GM13977 (cell line): ENCODE measurements at regions of chr19 and their contacts with region 1.

Region 1: DNA sequence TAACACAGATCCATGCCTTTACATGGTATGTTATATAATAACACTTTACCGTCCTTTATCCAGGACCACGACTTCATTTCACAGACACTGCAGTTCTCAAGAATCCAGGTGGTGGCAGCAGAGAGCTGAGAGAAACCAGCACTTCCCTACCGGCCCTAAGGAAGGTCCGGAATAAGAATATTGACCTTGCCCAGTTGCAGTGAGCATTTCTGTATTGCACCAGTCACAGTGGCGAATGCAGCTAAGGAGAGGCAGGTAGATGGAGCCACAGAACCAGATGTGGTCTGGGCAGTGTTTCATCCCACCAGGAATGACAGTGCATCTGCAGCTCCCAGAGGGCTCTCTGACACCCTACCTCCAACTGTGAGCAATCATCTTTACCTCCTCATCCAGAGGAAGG is 44.6 kb downstream of the ZNF787 start:
- DNase-seq: peak; percentile 39
- CTCF ChIP-seq: peak; percentile 61

Region 2: DNA sequence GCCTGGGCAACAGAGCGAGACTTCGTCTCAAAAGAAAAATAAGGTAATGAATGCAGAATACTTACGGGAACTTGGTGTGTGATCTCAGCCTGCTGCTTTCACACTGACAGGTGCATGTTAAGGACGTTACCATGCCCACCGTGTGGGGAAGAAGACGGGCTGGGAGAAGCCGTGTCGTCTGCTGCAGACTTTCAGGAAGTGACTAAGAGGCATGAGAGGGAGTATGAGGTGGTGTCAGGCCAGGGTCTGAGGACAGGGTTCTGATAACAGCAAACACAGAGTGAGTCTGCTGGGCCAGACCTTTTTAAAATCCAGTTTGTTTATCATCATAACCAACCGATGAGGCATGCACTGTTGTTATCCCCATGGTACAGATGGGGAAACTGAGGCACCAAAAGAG is 85.8 kb after region 1 on chr19:
- in situ Hi-C with region 1: loop called (anchors 10 kb)
- DNase-seq: no peak
- CTCF ChIP-seq: no peak

Region 3: GRCh38 chr19:56176881-56177280 is 100.4 kb after region 1 on chr19:
- in situ Hi-C with region 1: no loop called
- DNase-seq: no peak
- CTCF ChIP-seq: no peak

Region 4: GRCh38 chr19:56193981-56194640 is 117.6 kb after region 1 on chr19:
- in situ Hi-C with region 1: no loop called
- DNase-seq: no peak
- CTCF ChIP-seq: no peak

Region 5: DNA sequence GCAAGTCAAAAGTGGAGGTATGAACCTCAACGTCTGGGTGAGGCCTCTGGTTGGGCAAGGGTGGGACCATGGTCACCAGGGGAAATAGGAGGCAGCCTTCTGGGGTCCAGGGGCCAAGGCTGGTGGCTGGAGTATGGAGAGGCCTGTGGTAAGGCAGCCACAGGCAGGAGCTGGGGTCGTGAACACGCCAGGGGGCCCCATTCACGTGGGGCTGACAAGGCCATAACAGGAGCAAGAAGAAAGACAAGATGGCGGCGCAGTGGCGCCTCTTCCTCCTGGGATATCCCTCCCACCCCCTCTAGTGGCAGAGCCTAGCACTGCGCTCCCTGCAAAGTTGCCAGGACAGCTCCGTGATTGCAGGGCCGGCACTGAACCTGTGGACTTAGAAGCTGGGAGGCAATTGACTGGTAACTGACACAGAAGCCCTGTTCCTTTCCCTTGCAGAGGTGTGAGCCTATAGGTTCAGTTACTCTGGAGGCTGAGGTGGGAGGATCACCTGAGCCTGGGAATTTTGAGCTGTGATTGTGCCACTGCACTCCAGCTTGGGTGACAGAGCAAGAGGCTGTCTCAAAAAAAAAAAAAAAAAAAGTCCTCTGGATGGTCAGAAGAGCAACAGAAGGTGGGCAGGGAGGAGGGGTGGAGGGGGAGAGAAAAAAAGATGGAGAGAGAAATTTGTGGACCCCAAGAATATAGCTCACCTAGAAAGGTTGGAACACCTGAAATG is 176.4 kb after region 1 on chr19:
- in situ Hi-C with region 1: no loop called
- DNase-seq: peak; percentile 69
- CTCF ChIP-seq: peak; percentile 87

Region 6: GRCh38 chr19:56321989-56322440 is 245.5 kb after region 1 on chr19:
- in situ Hi-C with region 1: loop called (anchors 10 kb)
- DNase-seq: no peak
- CTCF ChIP-seq: no peak